ENCODE measurements at regions of chr18 and their contacts with region 1.

Region 1: GRCh38 chr18:77000527-77000926 is 132.1 kb downstream of the MBP start:
- DNase-seq: peak; percentile 61
- ATAC-seq: peak in 1 of 2 donors; percentile 28

Region 2: GRCh38 chr18:77054606-77055428 is 54.3 kb after region 1 on chr18:
- intact Hi-C with region 1: loop called (anchors 5 kb)
- DNase-seq: peak; percentile 88
- ATAC-seq: peak; percentile 82 to 87

Region 3: GRCh38 chr18:77207540-77207939 is 207.0 kb after region 1 on chr18:
- intact Hi-C with region 1: loop called (anchors 2 to 5 kb)
- DNase-seq: peak; percentile 62
- ATAC-seq: peak; percentile 53 to 78

Region 4: GRCh38 chr18:77478646-77479442 is 478.3 kb after region 1 on chr18:
- intact Hi-C with region 1: loop called in 1 of 2 experiments (anchors 10 kb)
- DNase-seq: peak; percentile 54
- ATAC-seq: peak; percentile 87 to 97

Region 5: DNA sequence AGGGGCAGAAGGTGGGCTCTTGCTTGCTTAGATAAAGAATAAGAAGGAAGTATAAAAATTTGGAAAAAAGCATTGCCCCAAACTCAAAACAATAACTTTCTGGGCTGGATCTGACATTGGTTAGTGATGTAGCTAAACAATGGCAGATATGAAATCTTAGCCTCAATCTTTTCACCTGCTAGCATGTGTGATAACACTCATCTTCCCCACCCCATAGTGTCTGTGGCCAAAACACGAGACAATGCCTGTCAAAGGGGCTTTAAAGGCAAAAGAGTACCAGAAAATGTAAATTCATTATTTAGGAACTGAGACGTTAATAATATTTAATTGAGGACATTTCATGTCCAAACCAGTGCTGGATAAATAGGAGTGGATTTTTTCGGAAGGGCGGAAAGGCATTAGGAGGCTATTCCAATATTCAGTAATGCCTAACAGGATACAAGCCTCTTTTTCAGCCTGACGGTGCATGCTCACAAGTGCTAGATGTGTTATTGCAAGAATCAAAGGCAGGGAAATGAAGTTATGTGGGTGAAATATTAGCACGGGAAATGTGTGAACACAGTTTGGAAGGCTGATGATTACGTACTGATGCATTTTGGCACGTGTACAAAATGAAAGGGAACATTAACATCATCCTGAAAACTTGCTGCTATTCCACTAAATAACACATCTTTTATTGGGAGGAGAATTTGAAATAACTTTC is 644.8 kb after region 1 on chr18:
- intact Hi-C with region 1: loop called in 1 of 2 experiments (anchors 5 kb)
- DNase-seq: no peak
- ATAC-seq: no peak